Endothelial cell of umbilical vein (primary cell): ENCODE measurements at regions of chr13 and their contacts with region 1.

Region 1: DNA sequence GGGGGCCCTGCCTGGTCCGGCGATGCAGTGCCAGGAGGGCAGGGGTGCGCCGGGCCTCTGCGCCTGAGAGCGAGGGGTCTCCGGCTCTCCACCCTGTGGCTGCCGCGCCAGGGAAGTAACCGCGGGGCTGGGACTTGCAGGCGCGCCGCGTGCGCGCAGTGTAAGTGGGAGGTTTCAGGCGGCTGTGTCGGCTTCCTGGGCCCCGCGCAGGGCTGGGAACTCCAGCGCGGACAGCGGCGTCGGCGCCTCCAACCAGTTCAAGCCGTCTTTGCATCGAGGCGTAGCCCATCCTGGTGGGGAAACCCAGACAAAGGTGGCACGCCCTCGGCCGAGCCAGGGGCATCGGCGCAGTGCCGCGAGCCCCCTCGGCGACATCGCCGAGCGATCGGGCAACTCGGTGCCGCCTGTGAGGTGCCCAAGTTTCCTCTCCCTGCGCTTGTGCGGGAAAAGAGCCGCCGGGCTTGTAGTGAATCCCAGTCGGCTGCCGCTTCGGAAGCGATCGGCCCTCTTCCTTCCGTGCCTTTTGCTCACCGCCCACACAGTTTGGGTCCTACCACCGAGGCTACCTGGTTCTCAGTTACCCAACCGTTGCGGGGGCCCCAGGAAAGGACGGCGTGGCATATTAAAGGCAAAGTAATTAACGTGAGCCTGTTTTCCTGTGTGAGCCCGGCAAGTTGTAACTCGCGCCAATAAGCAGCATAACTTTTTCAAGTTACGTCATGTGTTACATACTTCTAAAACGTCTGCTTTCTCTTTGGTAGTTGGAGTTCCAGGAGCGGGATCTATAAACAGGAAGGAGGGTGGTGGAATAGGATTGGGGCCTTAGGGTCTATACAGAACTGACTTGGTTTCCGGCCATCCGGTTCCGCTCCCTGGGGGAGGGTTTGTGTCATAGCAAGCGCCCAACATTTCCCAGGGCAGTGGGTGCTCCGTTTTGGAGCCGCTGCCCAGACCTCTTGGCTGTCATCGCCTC is 1.2 kb downstream of the LRCH1 start:
- DNase-seq: peak; percentile 67
- H3K4me3 ChIP-seq: peak overlapping the region; percentile 72 to 92 (median 87)
- H3K27ac ChIP-seq: peak overlapping the region; percentile 57
- H3K4me1 ChIP-seq: peaks cover 31% of the 10 kb centered on the region
- H3K27me3 ChIP-seq: no peaks in the 10 kb centered on the region
- CTCF ChIP-seq: no peak
- POLR2A ChIP-seq: no peak

Region 2: GRCh38 chr13:46492946-46493345 is 61.2 kb before region 1 on chr13:
- CTCF ChIA-PET with region 1: interaction called, 5 read pairs
- POLR2A ChIA-PET with region 1: no interaction called
- dilution Hi-C with region 1: no loop called
- intact Hi-C with region 1: loop called (anchors 1 kb)
- DNase-seq: peak; percentile 59
- H3K4me3 ChIP-seq: no peak overlapping the region
- H3K27ac ChIP-seq: no peak overlapping the region
- H3K4me1 ChIP-seq: no peaks in the 10 kb centered on the region
- H3K27me3 ChIP-seq: peaks cover 20% of the 10 kb centered on the region in 2 experiments
- CTCF ChIP-seq: peak; percentile 33
- POLR2A ChIP-seq: no peak

Region 3: GRCh38 chr13:46603165-46603603 is 49.0 kb after region 1 on chr13:
- CTCF ChIA-PET with region 1: interaction called, 10 read pairs
- POLR2A ChIA-PET with region 1: no interaction called
- dilution Hi-C with region 1: no loop called
- intact Hi-C with region 1: loop called (anchors 1 kb)
- DNase-seq: peak; percentile 23
- H3K4me3 ChIP-seq: no peak overlapping the region
- H3K27ac ChIP-seq: no peak overlapping the region
- H3K4me1 ChIP-seq: peaks cover 21% of the 10 kb centered on the region
- H3K27me3 ChIP-seq: no peaks in the 10 kb centered on the region
- CTCF ChIP-seq: peak; percentile 12 to 14
- POLR2A ChIP-seq: no peak

Region 4: GRCh38 chr13:46655377-46656180 is 101.4 kb after region 1 on chr13:
- CTCF ChIA-PET with region 1: interaction called, 7 read pairs
- POLR2A ChIA-PET with region 1: no interaction called
- dilution Hi-C with region 1: no loop called
- intact Hi-C with region 1: loop called (anchors 1 kb)
- DNase-seq: peak; percentile 86
- H3K4me3 ChIP-seq: peak overlapping the region in 2 of 3 experiments; percentile 9 to 51
- H3K27ac ChIP-seq: peak overlapping the region; percentile 86
- H3K4me1 ChIP-seq: peaks cover 35% of the 10 kb centered on the region
- H3K27me3 ChIP-seq: no peaks in the 10 kb centered on the region
- CTCF ChIP-seq: no peak
- POLR2A ChIP-seq: no peak

Region 5: DNA sequence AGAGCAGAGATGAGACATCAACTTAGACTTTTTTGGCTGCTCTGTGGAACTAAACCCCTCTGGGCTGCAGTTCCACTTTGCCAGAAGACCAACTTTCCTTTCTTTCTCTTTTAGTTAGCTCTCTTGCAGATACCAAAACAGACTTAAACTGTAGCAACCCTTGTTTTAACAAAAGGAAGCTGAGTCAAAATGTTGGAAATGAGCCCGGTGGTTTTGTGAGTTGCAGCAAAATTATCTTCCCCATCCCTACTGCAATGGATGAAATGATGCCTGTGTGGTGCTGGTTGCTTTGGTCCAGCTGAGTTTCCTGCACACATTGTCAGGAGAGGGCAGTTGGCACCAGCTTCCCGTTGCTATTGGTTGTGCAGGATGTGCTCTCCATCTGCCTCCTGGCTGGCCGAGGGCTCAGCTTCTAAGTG is 114.1 kb after region 1 on chr13:
- CTCF ChIA-PET with region 1: interaction called, 12 read pairs
- POLR2A ChIA-PET with region 1: no interaction called
- dilution Hi-C with region 1: no loop called
- intact Hi-C with region 1: loop called (anchors 1 kb)
- DNase-seq: peak; percentile 89
- H3K4me3 ChIP-seq: no peak overlapping the region
- H3K27ac ChIP-seq: peak overlapping the region; percentile 13
- H3K4me1 ChIP-seq: peaks cover 38% of the 10 kb centered on the region
- H3K27me3 ChIP-seq: no peaks in the 10 kb centered on the region
- CTCF ChIP-seq: no peak
- POLR2A ChIP-seq: no peak

Region 6: GRCh38 chr13:46796515-46797474 is 242.6 kb after region 1 on chr13 and contains the start of gene ESD:
- CTCF ChIA-PET with region 1: no interaction called
- POLR2A ChIA-PET with region 1: no interaction called
- dilution Hi-C with region 1: no loop called
- intact Hi-C with region 1: loop called (anchors 2 kb)
- DNase-seq: peak; percentile 89
- H3K4me3 ChIP-seq: peak within 1 kb of the TSS; percentile 56 to 89 (median 81)
- H3K27ac ChIP-seq: peak within 1 kb of the TSS; percentile 63
- H3K4me1 ChIP-seq: peaks cover 9% of the 10 kb centered on the region
- H3K27me3 ChIP-seq: peaks cover 2 to 9% of the 10 kb centered on the region in 2 experiments
- CTCF ChIP-seq: no peak
- POLR2A ChIP-seq: peak; percentile 79
- total RNA-seq, gene ESD: 76.4 and 81.1 TPM in 2 replicates